OCI-LY7 (cell line): ENCODE measurements at regions of chr7 and their contacts with region 1.

Region 1: GRCh38 chr7:42886129-42886528 is 25.7 kb downstream of the C7orf25 start:
- DNase-seq: peak; percentile 45
- H3K4me3 ChIP-seq: no peak overlapping the region
- H3K27ac ChIP-seq: peak overlapping the region; percentile 33
- H3K4me1 ChIP-seq: peaks cover 77% of the 10 kb centered on the region
- CTCF ChIP-seq: peak; percentile 74

Region 2: DNA sequence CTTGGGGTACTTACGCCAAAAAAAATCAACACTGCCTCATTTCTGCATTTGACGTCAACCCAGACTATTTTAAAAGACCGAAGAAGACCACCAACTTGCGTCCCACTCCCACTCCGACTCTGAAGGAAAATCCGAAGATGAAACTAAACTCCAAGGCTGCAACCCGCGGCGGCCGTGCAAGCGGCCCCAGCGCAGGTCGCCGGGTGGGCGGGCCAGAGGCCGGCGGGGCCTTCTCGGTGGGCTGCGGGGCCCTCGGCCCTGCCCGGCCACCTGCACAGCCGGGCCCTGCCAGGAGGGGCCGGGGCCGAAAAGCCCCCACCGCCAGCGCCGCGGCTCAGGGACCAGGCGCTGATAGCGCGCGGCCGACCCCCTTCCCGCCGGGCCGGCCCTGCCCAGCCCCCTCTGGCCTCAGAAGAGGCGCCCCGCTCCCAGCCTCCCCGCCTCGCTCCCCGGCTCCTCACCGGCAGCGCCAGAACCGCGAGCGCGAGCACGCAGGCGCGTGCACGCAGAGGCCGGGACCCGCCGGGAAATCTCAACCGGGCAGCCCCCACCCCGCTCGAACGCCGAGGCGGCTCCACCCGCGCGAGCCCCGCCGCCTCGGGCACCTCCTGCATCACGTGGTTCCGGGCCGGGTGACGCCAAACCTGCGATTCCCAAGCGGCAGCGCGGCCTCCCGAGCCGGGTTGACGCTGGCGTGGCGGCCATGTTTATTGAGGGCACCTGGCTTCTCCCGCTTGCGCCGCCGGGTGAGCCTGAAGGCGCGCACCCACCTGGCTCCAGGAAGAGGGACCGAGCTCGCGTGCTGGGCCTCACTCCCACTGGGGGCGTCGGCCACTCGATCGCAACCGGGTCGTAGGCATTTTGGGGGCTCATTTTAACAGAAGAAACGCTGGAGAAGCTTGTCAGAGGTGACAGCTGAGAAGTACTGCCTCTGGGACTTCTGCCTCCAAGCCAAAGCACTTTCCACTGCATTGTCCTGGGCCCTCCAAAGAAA is 25.6 kb after region 1 on chr7 and contains the start of gene C7orf25:
- CTCF ChIA-PET with region 1: no interaction called
- POLR2A ChIA-PET with region 1: interaction called, 11 read pairs
- intact Hi-C with region 1: loop called (anchors 2 kb)
- DNase-seq: peak; percentile 97
- H3K4me3 ChIP-seq: peak within 1 kb of the TSS; percentile 82
- H3K27ac ChIP-seq: peak within 1 kb of the TSS; percentile 24
- H3K4me1 ChIP-seq: peaks cover 22% of the 10 kb centered on the region
- CTCF ChIP-seq: peak; percentile 44; the same call in 1 of the 2 replicates
- total RNA-seq, gene C7orf25: 2.3 and 6.0 TPM in 2 replicates

Region 3: DNA sequence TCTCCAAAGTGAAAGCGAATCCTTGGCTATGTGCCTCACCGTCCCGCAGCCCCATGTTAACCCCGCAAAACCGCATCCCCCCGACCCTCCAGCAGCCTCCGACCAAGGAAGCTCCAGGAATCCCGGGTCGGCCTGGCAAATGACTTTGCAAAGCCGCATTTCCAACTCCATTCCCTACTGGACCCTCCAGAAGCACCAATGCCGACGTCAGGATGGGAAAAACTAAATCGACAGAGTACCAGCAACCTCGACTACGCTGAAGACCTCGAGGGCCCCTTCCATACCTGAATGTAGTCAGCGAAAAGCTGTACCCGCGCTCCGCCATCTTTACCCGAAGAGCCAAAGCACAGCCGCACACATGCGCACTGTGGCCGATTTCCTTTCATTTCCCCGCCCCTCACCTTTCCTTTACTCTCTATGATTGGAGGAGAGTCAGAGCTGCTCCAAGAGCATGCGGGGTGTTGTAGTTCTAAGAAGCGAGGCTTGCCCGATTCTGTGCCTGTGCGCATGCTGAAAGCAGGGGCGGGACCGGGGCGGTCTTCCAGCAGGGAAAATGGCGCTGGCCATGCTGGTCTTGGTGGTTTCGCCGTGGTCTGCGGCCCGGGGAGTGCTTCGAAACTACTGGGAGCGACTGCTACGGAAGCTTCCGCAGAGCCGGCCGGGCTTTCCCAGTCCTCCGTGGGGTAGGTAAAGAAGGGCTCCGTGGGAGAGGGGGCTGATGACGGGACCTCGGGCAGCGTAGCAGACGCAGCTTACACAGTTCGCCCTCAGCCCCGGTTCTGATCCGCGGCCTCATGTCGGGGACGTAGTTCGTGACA is 45.9 kb after region 1 on chr7 and contains the starts of genes MRPL32 and PSMA2:
- CTCF ChIA-PET with region 1: interaction called, 3 read pairs
- POLR2A ChIA-PET with region 1: interaction called, 25 read pairs
- intact Hi-C with region 1: loop called (anchors 2 kb)
- DNase-seq: peak; percentile 98
- H3K4me3 ChIP-seq: peak within 1 kb of the TSS; percentile 96
- H3K27ac ChIP-seq: peak within 1 kb of the TSS; percentile 58
- H3K4me1 ChIP-seq: peaks cover 41% of the 10 kb centered on the region
- CTCF ChIP-seq: no peak
- total RNA-seq, gene MRPL32: 61.8 and 89.7 TPM in 2 replicates
- total RNA-seq, gene PSMA2: 40.2 and 45.7 TPM in 2 replicates